ENCODE measurements at regions of chr10 and their contacts with region 1.

Region 1: DNA sequence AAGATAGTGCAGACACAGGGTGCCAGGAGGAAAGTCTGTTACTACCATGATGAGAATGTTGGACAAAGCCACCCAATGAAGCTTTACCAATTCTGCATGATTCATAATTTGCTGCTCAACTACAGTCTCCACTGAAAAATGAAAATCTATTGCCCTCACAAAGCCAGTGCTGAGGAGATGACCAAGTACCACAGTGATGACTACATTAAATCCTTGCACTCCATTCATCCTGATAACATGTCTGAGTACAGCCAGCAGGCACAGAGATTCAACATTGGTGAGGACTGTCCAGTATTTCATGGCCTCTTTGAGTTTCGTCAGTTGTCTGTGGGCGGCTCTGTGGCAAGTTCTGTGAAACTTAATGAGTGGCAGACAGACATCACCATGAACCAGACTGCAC is 144.0 kb downstream of the PLCE1 start:
- DNase-seq: no peak
- H3K4me3 ChIP-seq: no peak overlapping the region
- CTCF ChIP-seq: no peak

Region 2: GRCh38 chr10:94038024-94038423 is 99.7 kb before region 1 on chr10:
- CTCF ChIA-PET with region 1: no interaction called
- POLR2A ChIA-PET with region 1: no interaction called
- DNase-seq: no peak
- H3K4me3 ChIP-seq: no peak overlapping the region
- CTCF ChIP-seq: no peak

Region 3: GRCh38 chr10:94092848-94093247 is 44.9 kb before region 1 on chr10:
- CTCF ChIA-PET with region 1: no interaction called
- POLR2A ChIA-PET with region 1: no interaction called
- DNase-seq: no peak
- H3K4me3 ChIP-seq: no peak overlapping the region
- CTCF ChIP-seq: no peak

Region 4: GRCh38 chr10:94123258-94123995 is 14.3 kb before region 1 on chr10:
- CTCF ChIA-PET with region 1: interaction called, 10 read pairs
- POLR2A ChIA-PET with region 1: no interaction called
- DNase-seq: peak; percentile 79
- H3K4me3 ChIP-seq: no peak overlapping the region
- CTCF ChIP-seq: no peak

Measured in AG04449 (cell line).